ENCODE measurements at regions of chr6 and their contacts with region 1.

Region 1: GRCh38 chr6:76381612-76382011 is 309.1 kb upstream of the IMPG1 start:
- DNase-seq: no peak
- H3K4me3 ChIP-seq: no peak overlapping the region
- H3K4me3 Mint-ChIP-seq: no peak overlapping the region
- H3K27ac ChIP-seq: no peak overlapping the region
- H3K27ac Mint-ChIP-seq: no peak overlapping the region
- H3K4me1 ChIP-seq: no peaks in the 10 kb centered on the region
- H3K4me1 Mint-ChIP-seq: no peaks in the 10 kb centered on the region
- H3K27me3 ChIP-seq: no peaks in the 10 kb centered on the region
- H3K27me3 Mint-ChIP-seq: no peaks in the 10 kb centered on the region

Region 2: GRCh38 chr6:76275746-76276145 is 105.9 kb before region 1 on chr6:
- CTCF ChIA-PET with region 1: no interaction called
- POLR2A ChIA-PET with region 1: no interaction called
- intact Hi-C with region 1: no loop called
- DNase-seq: no peak
- H3K4me3 ChIP-seq: no peak overlapping the region
- H3K4me3 Mint-ChIP-seq: no peak overlapping the region
- H3K27ac ChIP-seq: no peak overlapping the region
- H3K27ac Mint-ChIP-seq: peak overlapping the region in 1 of 7 donors; percentile 48
- H3K4me1 ChIP-seq: no peaks in the 10 kb centered on the region
- H3K4me1 Mint-ChIP-seq: no peaks in the 10 kb centered on the region
- H3K27me3 ChIP-seq: no peaks in the 10 kb centered on the region
- H3K27me3 Mint-ChIP-seq: no peaks in the 10 kb centered on the region

Region 3: GRCh38 chr6:76397966-76398365 is 16.4 kb after region 1 on chr6:
- CTCF ChIA-PET with region 1: no interaction called
- POLR2A ChIA-PET with region 1: no interaction called
- intact Hi-C with region 1: loop called (anchors 1 kb)
- DNase-seq: no peak
- H3K4me3 ChIP-seq: no peak overlapping the region
- H3K4me3 Mint-ChIP-seq: no peak overlapping the region
- H3K27ac ChIP-seq: no peak overlapping the region
- H3K27ac Mint-ChIP-seq: no peak overlapping the region
- H3K4me1 ChIP-seq: no peaks in the 10 kb centered on the region
- H3K4me1 Mint-ChIP-seq: no peaks in the 10 kb centered on the region
- H3K27me3 ChIP-seq: no peaks in the 10 kb centered on the region
- H3K27me3 Mint-ChIP-seq: no peaks in the 10 kb centered on the region

Region 4: DNA sequence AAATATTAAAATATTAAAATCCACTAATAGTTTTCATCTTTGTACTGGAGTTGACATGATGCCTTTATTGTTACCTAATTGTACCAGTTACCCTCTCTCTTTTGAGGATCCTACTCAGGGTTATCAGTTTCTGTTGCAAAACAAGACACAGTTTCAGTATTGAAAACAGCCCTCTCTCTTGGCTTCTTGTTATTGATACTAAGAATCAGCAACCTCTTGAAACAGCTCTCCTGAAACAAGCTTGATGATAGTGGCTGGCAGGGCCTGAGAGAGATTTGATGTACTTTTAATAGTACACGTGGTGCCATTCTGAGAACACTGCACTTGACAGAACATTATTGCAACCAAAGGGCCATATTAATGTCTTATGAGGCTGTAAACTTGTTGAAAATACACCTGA is 1206.4 kb after region 1 on chr6:
- CTCF ChIA-PET with region 1: no interaction called
- POLR2A ChIA-PET with region 1: no interaction called
- intact Hi-C with region 1: no loop called
- DNase-seq: no peak
- H3K4me3 ChIP-seq: no peak overlapping the region
- H3K4me3 Mint-ChIP-seq: no peak overlapping the region
- H3K27ac ChIP-seq: no peak overlapping the region
- H3K27ac Mint-ChIP-seq: no peak overlapping the region
- H3K4me1 ChIP-seq: no peaks in the 10 kb centered on the region
- H3K4me1 Mint-ChIP-seq: no peaks in the 10 kb centered on the region
- H3K27me3 ChIP-seq: no peaks in the 10 kb centered on the region
- H3K27me3 Mint-ChIP-seq: no peaks in the 10 kb centered on the region